Heart right ventricle (tissue), 16 donors: ENCODE measurements at regions of chr7 and their contacts with region 1.

Region 1: DNA sequence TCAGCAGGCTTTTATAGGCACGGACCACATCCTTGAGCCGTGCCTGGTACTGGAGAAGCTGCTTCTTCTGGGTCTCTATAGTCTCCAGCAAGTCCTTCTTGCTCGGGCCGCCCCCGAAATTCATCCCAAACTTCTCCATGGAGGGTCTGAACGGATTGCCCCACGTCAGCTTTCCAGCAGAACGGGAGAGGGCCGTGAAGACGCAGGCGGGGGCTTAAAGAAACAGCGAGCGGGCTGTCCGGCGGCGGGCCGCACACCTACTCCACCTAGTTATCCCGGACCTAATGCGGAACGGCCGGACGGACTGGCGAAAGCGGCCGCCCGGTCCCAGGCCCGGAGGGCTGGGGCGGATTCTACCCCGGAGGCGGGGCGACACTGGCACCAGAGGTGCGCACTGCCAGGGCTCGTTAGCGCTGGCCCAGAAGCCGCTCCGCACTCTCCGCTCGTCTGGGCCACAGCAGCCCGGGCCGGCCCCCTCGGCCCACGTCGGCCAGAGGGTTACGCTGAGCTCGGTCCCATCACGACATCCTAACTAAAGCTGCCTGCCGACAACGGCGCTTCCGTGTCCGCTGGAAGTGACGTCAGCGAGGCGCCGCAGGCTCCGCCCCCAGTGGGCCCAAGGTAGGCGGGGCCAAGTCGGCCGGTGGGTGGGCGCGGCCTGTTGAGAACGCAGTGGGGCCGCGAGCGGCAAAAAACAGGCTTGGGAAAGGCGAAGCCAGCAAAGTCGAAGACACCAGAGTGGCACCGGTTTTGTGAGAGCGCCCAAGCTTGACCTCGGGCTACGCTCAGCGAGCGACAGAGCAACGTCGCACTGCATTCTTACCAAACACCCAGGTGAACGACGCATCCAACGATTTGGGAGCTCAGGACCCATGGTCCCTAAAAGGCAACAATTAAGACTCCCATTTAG is at the start of gene GCC1:
- DNase-seq: peak; percentile 93 to 95
- ATAC-seq: peak; percentile 85 to 93 (median 90)
- H3K4me3 ChIP-seq: peak within 1 kb of the TSS; percentile 74 to 97 (median 86)
- H3K27ac ChIP-seq: peak within 1 kb of the TSS; percentile 55 to 95 (median 85)
- H3K4me1 ChIP-seq: peaks cover 19 to 80% (median 67%) of the 10 kb centered on the region in 9 donors
- H3K27me3 ChIP-seq: no peaks in the 10 kb centered on the region
- CTCF ChIP-seq: no peak
- total RNA-seq, gene GCC1: 5.7 to 8.9 (median 7.1) TPM

Region 2: GRCh38 chr7:127392566-127393367 is 192.5 kb before region 1 on chr7 and contains the start of gene ZNF800:
- intact Hi-C with region 1: loop called in 6 of 10 experiments (anchors 5 to 10 kb)
- DNase-seq: peak; percentile 90 to 95
- ATAC-seq: peak; percentile 98 to 100 (median 99)
- H3K4me3 ChIP-seq: peak within 1 kb of the TSS; percentile 81 to 100 (median 90)
- H3K27ac ChIP-seq: peak within 1 kb of the TSS; percentile 83 to 99 (median 97)
- H3K4me1 ChIP-seq: peaks cover 0 to 44% (median 40%) of the 10 kb centered on the region in 9 donors
- H3K27me3 ChIP-seq: no peaks in the 10 kb centered on the region
- CTCF ChIP-seq: peak in 1 of 9 donors; percentile 7
- total RNA-seq, gene ZNF800: 17.5 to 35.8 (median 25.4) TPM

Region 3: GRCh38 chr7:127478024-127478355 is 107.3 kb before region 1 on chr7:
- intact Hi-C with region 1: no loop called
- DNase-seq: no peak
- ATAC-seq: no peak
- H3K4me3 ChIP-seq: no peak overlapping the region
- H3K27ac ChIP-seq: no peak overlapping the region
- H3K4me1 ChIP-seq: no peaks in the 10 kb centered on the region
- H3K27me3 ChIP-seq: peaks cover 0 to 27% (median 6%) of the 10 kb centered on the region in 7 donors
- CTCF ChIP-seq: no peak

Region 4: DNA sequence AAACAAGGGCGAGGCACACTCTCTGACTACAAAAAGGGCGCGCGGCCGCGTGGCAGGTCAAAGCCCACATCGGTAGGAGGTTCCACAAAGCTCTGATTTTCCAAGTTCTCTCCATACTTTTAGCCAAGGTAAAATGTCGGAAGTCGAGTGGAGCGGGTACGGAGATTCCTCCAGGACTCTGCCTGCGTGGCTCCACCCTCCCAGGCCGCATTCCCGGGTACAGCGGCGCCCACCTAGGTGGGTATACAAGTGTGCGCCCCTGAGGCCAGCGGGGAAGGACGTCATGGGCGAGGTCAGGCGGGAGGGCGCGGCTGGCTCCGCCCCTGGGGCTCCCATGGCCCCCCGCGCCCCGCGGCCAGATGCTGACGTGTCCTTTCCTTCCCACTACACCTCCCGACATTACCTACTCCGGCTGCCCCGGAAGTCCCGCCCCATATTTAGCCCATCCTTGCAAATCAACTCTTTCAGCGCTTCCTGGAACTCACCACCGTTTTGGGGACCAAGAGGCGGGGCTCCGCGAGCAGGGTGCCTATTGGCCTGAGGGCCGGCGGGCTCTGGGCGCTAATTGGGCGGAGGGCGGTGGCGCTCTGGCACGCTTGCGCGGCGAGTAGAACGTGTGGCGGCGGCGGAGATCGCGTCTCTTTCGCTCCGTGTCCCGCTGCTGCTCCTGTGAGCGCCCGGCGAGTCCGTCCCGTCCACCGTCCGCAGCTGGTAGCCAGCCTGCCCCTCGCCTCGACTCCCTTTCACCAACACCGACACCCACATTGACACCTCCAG is 66.4 kb after region 1 on chr7 and contains the start of gene SND1:
- intact Hi-C with region 1: loop called in 9 of 10 experiments (anchors 2 to 10 kb)
- DNase-seq: peak; percentile 98 to 100
- ATAC-seq: peak; percentile 97 to 99 (median 98)
- H3K4me3 ChIP-seq: peak within 1 kb of the TSS; percentile 66 to 92 (median 80)
- H3K27ac ChIP-seq: peak within 1 kb of the TSS; percentile 85 to 99 (median 94)
- H3K4me1 ChIP-seq: peaks cover 0 to 49% (median 38%) of the 10 kb centered on the region in 9 donors
- H3K27me3 ChIP-seq: no peaks in the 10 kb centered on the region
- CTCF ChIP-seq: no peak
- total RNA-seq, gene SND1: 66.8 to 104 (median 80.8) TPM